ENCODE measurements at regions of chr7 and their contacts with region 1.

Region 1: GRCh38 chr7:816300-816750 is 16.0 kb upstream of the SUN1 start:
- DNase-seq: peak; percentile 97
- ATAC-seq: peak; percentile 99
- H3K4me3 Mint-ChIP-seq: peak overlapping the region; percentile 80
- H3K27ac Mint-ChIP-seq: no peak overlapping the region
- H3K4me1 Mint-ChIP-seq: peaks cover 36% of the 10 kb centered on the region
- H3K27me3 Mint-ChIP-seq: peaks cover 27% of the 10 kb centered on the region

Region 2: DNA sequence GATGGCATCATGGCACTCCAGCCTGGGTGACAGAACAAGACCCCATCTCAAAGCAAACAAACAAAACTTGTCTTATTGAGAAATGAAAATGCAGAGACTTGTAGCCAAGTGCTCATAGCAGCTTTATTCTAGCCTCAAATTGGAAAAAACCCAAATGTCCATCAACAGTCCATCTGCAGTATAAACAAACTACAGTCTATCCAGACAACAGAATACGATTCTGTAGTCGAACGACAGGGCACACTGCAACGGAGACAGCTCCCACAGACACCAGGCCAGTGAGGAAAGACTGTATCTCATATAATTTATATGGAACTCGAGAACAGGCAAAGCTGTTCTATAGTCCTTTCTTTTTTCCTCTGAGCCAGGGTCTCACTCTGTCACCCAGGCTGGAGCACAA is 24.8 kb before region 1 on chr7:
- POLR2A ChIA-PET with region 1: no interaction called
- DNase-seq: no peak
- ATAC-seq: no peak
- H3K4me3 Mint-ChIP-seq: no peak overlapping the region
- H3K27ac Mint-ChIP-seq: no peak overlapping the region
- H3K4me1 Mint-ChIP-seq: no peaks in the 10 kb centered on the region
- H3K27me3 Mint-ChIP-seq: no peaks in the 10 kb centered on the region

Region 3: GRCh38 chr7:831596-832166 is 15.4 kb after region 1 on chr7:
- POLR2A ChIA-PET with region 1: interaction called, 20 read pairs
- DNase-seq: no peak
- ATAC-seq: peak; percentile 41
- H3K4me3 Mint-ChIP-seq: peak overlapping the region; percentile 79
- H3K27ac Mint-ChIP-seq: peak overlapping the region; percentile 84
- H3K4me1 Mint-ChIP-seq: peaks cover 31% of the 10 kb centered on the region
- H3K27me3 Mint-ChIP-seq: no peaks in the 10 kb centered on the region

Region 4: DNA sequence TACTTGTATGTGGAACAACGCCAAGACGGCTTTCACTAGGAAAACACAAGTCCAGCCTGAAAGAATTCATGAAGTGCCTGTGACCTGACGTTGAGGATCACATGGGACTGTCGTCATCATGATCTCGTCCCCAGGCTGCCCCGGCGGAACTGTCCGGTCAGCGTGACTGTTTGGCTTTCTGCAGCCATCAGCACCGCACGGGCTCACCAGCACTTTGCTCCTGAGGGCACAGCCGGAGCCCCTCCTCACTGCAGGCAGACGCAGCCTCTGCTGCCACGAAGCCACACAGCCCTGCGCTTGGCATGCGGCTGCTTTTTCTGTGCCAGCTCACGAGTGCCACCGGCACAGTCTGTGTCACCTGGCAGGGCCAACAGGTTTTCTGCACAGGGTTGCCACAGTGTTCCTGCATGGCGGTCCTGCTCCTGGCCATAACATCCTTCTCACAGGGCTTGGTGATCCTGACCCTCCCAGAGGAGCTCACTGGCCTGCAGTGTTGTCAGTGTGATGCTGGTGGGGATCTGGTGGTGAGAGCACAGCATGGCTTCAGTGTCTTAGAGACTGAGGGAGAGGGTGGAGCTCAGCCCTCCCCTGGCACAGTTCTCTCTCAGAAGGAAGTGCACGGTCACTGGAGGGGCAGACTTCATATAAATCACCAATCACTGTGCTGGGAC is 50.8 kb after region 1 on chr7:
- POLR2A ChIA-PET with region 1: no interaction called
- DNase-seq: no peak
- ATAC-seq: no peak
- H3K4me3 Mint-ChIP-seq: no peak overlapping the region
- H3K27ac Mint-ChIP-seq: no peak overlapping the region
- H3K4me1 Mint-ChIP-seq: no peaks in the 10 kb centered on the region
- H3K27me3 Mint-ChIP-seq: no peaks in the 10 kb centered on the region

Region 5: DNA sequence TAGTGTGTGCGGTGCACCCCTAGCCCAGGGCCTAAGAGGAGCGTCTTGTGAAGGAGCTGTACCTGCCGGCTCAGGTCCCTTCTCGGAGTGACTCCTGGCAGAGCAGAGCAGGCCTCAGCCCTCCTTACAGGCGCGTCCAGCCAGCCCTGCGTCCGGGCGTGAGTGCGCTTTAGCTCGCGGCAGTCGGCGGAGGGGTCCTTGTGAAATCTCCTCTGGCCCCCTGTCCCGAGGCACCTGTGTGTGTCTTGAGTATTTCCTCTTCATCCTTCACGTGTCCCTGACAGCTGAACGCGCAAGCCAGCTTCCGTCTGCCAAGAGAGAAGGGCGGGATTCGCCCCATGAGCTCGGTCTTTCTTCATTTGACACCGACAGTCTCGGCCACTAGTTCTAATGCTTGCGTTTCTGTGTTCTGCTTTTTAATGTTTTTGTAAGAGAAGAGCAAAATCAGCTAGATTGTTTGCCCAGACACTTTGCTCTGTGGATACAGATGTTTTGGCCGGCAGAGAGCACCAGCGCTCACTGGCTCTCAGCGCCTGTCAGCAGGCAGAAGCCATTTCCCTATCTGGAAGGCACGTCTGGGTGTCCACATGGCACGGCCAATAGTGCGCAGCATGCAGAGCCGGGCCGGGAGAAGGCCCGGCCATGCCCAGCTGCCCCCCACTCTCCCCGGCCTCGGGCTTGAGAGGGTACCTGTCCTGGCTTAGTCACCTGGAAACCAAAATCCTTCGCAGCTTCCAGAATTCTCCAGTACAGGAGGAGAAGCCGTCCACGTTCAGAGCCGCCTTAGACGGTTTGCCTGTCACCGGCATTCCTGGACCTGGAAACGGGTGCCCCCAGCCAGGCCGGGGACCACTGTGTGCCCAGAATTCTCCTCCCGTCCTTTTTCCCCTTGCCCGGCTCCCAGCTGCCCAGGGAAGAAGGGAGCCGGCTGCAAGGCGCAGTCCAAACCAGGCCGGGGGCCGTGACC is 67.0 kb after region 1 on chr7:
- POLR2A ChIA-PET with region 1: no interaction called
- DNase-seq: no peak
- ATAC-seq: no peak
- H3K4me3 Mint-ChIP-seq: no peak overlapping the region
- H3K27ac Mint-ChIP-seq: no peak overlapping the region
- H3K4me1 Mint-ChIP-seq: peaks cover 7% of the 10 kb centered on the region
- H3K27me3 Mint-ChIP-seq: no peaks in the 10 kb centered on the region

Measured in activated naive CD8-positive, alpha-beta T cell treated with anti-CD3 and anti-CD28 coated beads, Interleukin-2, amount 10 ng/mL, durations not matched to agents 7 days and 5 days (primary cell).